CD8-positive, alpha-beta memory T cell (primary cell): ENCODE measurements at regions of chr16 and their contacts with region 1.

Region 1: DNA sequence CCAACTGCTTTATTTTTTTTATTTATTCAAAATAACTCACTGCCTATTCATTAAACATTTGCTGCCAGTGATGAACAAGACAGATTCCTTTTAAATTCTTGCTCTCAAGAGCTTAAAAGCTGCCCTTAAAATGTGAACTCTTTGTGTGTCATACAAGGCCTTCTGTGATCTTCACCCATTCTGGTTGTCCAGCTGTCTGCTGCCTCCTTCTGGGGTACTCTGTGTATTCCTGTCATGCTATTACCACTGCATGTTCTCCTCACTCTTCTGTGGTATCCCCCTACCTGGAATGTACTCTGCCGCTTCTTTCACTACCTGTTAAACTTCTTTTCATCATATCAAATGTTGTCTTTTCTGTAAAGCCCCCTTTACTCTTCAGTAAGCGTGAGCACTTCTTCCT is 165.8 kb downstream of the CHD9 start:
- DNase-seq: peak in 2 of 5 donors; percentile 1 to 3
- H3K4me3 ChIP-seq: no peak overlapping the region
- H3K4me3 Mint-ChIP-seq: no peak overlapping the region
- H3K27ac ChIP-seq: no peak overlapping the region
- H3K27ac Mint-ChIP-seq: no peak overlapping the region
- H3K4me1 ChIP-seq: no peaks in the 10 kb centered on the region
- H3K4me1 Mint-ChIP-seq: peaks cover 3 to 5% (median 5%) of the 10 kb centered on the region in 3 donors
- H3K27me3 ChIP-seq: no peaks in the 10 kb centered on the region
- H3K27me3 Mint-ChIP-seq: no peaks in the 10 kb centered on the region

Region 2: GRCh38 chr16:53703590-53704444 is 483.2 kb after region 1 on chr16 and contains the starts of genes FTO and RPGRIP1L:
- CTCF ChIA-PET with region 1: no interaction called
- POLR2A ChIA-PET with region 1: interaction called, 11 read pairs
- DNase-seq: peak; percentile 93 to 98 (median 95)
- H3K4me3 ChIP-seq: peak within 1 kb of the TSS; percentile 92
- H3K4me3 Mint-ChIP-seq: peak within 1 kb of the TSS; percentile 94 to 98 (median 97)
- H3K27ac ChIP-seq: peak within 1 kb of the TSS; percentile 62
- H3K27ac Mint-ChIP-seq: peak within 1 kb of the TSS; percentile 82 to 99 (median 96)
- H3K4me1 ChIP-seq: peaks cover 16% of the 10 kb centered on the region
- H3K4me1 Mint-ChIP-seq: peaks cover 39 to 52% (median 51%) of the 10 kb centered on the region in 3 donors
- H3K27me3 ChIP-seq: no peaks in the 10 kb centered on the region
- H3K27me3 Mint-ChIP-seq: peaks cover 0 to 2% of the 10 kb centered on the region in 2 donors
- total RNA-seq, gene FTO: 54.5 to 56.0 TPM
- total RNA-seq, gene RPGRIP1L: 9.6 to 9.8 TPM